CD8-positive, alpha-beta T cell (primary cell): ENCODE measurements at regions of chr15 and their contacts with region 1.

Region 1: GRCh38 chr15:64651573-64652260 is 123.7 kb downstream of the RBPMS2 start:
- DNase-seq: peak; percentile 5 to 80 (median 42)
- ATAC-seq: peak; percentile 94
- H3K4me3 ChIP-seq: no peak overlapping the region
- H3K4me3 Mint-ChIP-seq: peak overlapping the region; percentile 74
- H3K27ac ChIP-seq: peak overlapping the region; percentile 4 to 53
- H3K27ac Mint-ChIP-seq: peak overlapping the region; percentile 95
- H3K4me1 ChIP-seq: peaks cover 35% of the 10 kb centered on the region
- H3K4me1 Mint-ChIP-seq: peaks cover 50% of the 10 kb centered on the region
- H3K27me3 ChIP-seq: no peaks in the 10 kb centered on the region
- H3K27me3 Mint-ChIP-seq: no peaks in the 10 kb centered on the region
- CTCF ChIP-seq: no peak

Region 2: DNA sequence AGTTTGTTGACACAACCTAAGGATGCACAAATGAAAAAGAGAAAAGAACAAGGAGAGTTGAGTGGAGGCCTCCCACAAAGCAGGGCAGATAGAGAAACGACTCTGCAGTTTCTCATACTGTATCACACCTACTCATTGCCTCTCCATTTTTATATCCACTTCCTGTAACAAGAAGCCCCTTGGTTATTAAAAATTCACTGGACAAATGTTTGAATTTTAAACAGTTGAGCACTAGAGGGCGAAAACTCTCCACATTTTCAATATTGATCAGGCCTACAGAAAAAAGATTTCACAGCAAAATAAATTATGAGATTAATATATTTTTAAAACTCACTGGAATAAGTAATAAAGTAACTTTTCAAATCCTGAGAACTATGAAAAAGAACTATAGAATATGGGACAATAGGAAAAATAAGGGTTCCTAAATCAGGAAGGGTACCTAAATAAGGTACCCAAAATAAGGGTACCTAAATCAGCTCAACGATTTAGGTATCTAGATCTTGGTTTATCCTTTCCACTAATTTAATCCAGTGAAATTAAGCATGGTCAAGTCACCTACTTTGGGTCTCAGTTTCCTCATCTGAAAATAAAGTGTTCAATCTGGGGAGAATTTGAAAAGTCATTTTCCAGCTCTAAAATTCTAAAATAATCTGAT is 441.9 kb before region 1 on chr15:
- CTCF ChIA-PET with region 1: no interaction called
- POLR2A ChIA-PET with region 1: no interaction called
- intact Hi-C with region 1: loop called in 1 of 2 experiments (anchors 5 kb)
- DNase-seq: peak in 2 of 9 experiments; percentile 20 to 39
- ATAC-seq: no peak
- H3K4me3 ChIP-seq: no peak overlapping the region
- H3K4me3 Mint-ChIP-seq: no peak overlapping the region
- H3K27ac ChIP-seq: no peak overlapping the region
- H3K27ac Mint-ChIP-seq: no peak overlapping the region
- H3K4me1 ChIP-seq: no peaks in the 10 kb centered on the region
- H3K4me1 Mint-ChIP-seq: no peaks in the 10 kb centered on the region
- H3K27me3 ChIP-seq: no peaks in the 10 kb centered on the region
- H3K27me3 Mint-ChIP-seq: no peaks in the 10 kb centered on the region
- CTCF ChIP-seq: peak; percentile 59

Region 3: GRCh38 chr15:64430000-64430735 is 221.5 kb before region 1 on chr15:
- CTCF ChIA-PET with region 1: interaction called, 74 read pairs
- POLR2A ChIA-PET with region 1: interaction called, 7 read pairs
- intact Hi-C with region 1: loop called (anchors 1 kb)
- DNase-seq: peak; percentile 1 to 88 (median 43)
- ATAC-seq: peak; percentile 89
- H3K4me3 ChIP-seq: no peak overlapping the region
- H3K4me3 Mint-ChIP-seq: peak overlapping the region; percentile 57
- H3K27ac ChIP-seq: peak overlapping the region; percentile 49 to 65
- H3K27ac Mint-ChIP-seq: peak overlapping the region; percentile 92
- H3K4me1 ChIP-seq: peaks cover 52% of the 10 kb centered on the region
- H3K4me1 Mint-ChIP-seq: peaks cover 44% of the 10 kb centered on the region
- H3K27me3 ChIP-seq: no peaks in the 10 kb centered on the region
- H3K27me3 Mint-ChIP-seq: no peaks in the 10 kb centered on the region
- CTCF ChIP-seq: no peak

Region 4: DNA sequence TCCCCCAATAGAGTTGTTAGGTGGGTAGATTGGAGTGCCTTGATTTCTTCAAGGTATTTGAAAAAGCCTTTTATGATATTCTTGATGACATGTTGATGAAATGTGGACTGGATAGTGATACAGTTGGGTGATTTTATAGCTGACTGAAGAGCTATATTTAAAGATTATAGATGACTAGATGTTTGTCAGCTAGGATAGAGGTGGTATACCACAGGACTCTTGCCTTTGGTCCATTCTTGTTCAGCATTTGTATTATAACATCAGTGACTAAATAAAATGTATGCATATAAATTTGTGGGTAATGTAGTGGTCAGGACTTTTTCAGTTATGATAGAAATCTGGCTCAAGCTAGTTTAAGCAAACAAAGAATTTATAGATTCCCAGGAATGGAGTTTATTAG is 47.4 kb before region 1 on chr15:
- CTCF ChIA-PET with region 1: interaction called, 3 read pairs
- POLR2A ChIA-PET with region 1: interaction called, 3 read pairs
- intact Hi-C with region 1: loop called in 1 of 2 experiments (anchors 1 kb)
- DNase-seq: no peak
- ATAC-seq: no peak
- H3K4me3 ChIP-seq: no peak overlapping the region
- H3K4me3 Mint-ChIP-seq: no peak overlapping the region
- H3K27ac ChIP-seq: no peak overlapping the region
- H3K27ac Mint-ChIP-seq: peak overlapping the region; percentile 73
- H3K4me1 ChIP-seq: peaks cover 54% of the 10 kb centered on the region
- H3K4me1 Mint-ChIP-seq: peaks cover 56% of the 10 kb centered on the region
- H3K27me3 ChIP-seq: no peaks in the 10 kb centered on the region
- H3K27me3 Mint-ChIP-seq: no peaks in the 10 kb centered on the region
- CTCF ChIP-seq: no peak

Region 5: GRCh38 chr15:64611085-64611725 is 40.5 kb before region 1 on chr15:
- CTCF ChIA-PET with region 1: no interaction called
- POLR2A ChIA-PET with region 1: no interaction called
- intact Hi-C with region 1: loop called in 1 of 2 experiments (anchors 5 kb)
- DNase-seq: no peak
- ATAC-seq: no peak
- H3K4me3 ChIP-seq: no peak overlapping the region
- H3K4me3 Mint-ChIP-seq: no peak overlapping the region
- H3K27ac ChIP-seq: no peak overlapping the region
- H3K27ac Mint-ChIP-seq: peak overlapping the region; percentile 68
- H3K4me1 ChIP-seq: peaks cover 29% of the 10 kb centered on the region
- H3K4me1 Mint-ChIP-seq: peaks cover 41% of the 10 kb centered on the region
- H3K27me3 ChIP-seq: no peaks in the 10 kb centered on the region
- H3K27me3 Mint-ChIP-seq: no peaks in the 10 kb centered on the region
- CTCF ChIP-seq: no peak

Region 6: DNA sequence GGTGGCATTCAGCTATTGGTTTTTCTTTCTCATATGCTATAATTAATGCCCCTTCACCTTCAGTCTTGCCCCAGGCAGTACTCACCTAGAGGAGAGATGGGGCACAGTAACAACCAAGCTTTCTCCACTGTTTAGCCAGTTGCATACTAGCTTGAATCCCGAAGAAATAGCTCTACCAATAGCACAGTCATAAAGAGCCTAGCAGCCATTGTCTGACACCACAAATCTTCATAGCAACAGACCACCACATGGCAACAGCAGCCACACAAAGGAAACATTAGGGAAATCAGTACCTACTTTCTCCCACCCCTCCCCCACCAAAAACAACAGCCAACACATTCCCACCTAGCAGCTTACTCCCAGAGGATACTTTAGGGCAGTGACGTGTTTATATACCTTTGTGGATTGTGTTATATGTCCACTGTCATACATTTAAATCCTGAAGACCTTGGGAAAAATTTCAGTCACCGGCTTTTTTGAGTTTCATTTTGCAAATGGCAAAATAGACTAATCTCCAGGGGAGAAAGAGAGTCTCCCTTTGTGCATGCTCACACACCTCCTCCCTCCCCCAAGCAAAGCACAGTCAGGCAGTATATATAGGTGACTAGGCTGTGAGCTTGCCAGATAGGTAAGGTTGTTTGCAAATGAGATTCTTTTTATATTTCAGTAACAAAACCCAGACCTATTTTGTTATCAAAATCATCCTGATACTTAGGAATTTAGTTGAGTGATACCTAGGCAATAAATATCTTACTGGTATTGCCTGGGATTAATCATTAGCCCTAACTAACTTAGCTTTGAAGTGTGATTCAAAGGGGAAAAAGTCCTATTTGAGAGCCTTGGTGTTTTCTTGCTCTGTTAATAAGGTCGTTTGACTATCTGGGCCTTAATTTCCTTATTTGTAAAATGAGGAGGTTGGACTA is 16.9 kb before region 1 on chr15:
- CTCF ChIA-PET with region 1: interaction called, 11 read pairs
- POLR2A ChIA-PET with region 1: interaction called, 3 read pairs
- intact Hi-C with region 1: loop called in 1 of 2 experiments (anchors 2 kb)
- DNase-seq: peak in 5 of 9 experiments; percentile 27 to 78 (median 35)
- ATAC-seq: peak; percentile 64
- H3K4me3 ChIP-seq: peak overlapping the region; percentile 9 to 23
- H3K4me3 Mint-ChIP-seq: peak overlapping the region; percentile 68
- H3K27ac ChIP-seq: peak overlapping the region; percentile 36 to 77
- H3K27ac Mint-ChIP-seq: peak overlapping the region; percentile 86
- H3K4me1 ChIP-seq: peaks cover 74% of the 10 kb centered on the region
- H3K4me1 Mint-ChIP-seq: peaks cover 72% of the 10 kb centered on the region
- H3K27me3 ChIP-seq: no peaks in the 10 kb centered on the region
- H3K27me3 Mint-ChIP-seq: no peaks in the 10 kb centered on the region
- CTCF ChIP-seq: no peak